ENCODE measurements at regions of chr3 and their contacts with region 1.

Region 1: GRCh38 chr3:53160660-53161449 is at the start of gene PRKCD:
- DNase-seq: peak; percentile 57 to 91
- ATAC-seq: peak; percentile 41 to 73 (median 60)
- H3K4me3 ChIP-seq: peak within 1 kb of the TSS; percentile 95
- H3K4me3 Mint-ChIP-seq: peak within 1 kb of the TSS; percentile 93
- H3K27ac ChIP-seq: peak within 1 kb of the TSS; percentile 80
- H3K27ac Mint-ChIP-seq: peak within 1 kb of the TSS; percentile 82 to 94
- H3K4me1 ChIP-seq: peaks cover 57% of the 10 kb centered on the region
- H3K4me1 Mint-ChIP-seq: peaks cover 23 to 43% of the 10 kb centered on the region in 2 donors
- H3K27me3 ChIP-seq: peaks cover 8% of the 10 kb centered on the region
- H3K27me3 Mint-ChIP-seq: peaks cover 17 to 18% of the 10 kb centered on the region in 2 donors
- CTCF ChIP-seq: peak; percentile 57
- total RNA-seq, gene PRKCD: 31.7 to 60.0 (median 36.3) TPM

Region 2: DNA sequence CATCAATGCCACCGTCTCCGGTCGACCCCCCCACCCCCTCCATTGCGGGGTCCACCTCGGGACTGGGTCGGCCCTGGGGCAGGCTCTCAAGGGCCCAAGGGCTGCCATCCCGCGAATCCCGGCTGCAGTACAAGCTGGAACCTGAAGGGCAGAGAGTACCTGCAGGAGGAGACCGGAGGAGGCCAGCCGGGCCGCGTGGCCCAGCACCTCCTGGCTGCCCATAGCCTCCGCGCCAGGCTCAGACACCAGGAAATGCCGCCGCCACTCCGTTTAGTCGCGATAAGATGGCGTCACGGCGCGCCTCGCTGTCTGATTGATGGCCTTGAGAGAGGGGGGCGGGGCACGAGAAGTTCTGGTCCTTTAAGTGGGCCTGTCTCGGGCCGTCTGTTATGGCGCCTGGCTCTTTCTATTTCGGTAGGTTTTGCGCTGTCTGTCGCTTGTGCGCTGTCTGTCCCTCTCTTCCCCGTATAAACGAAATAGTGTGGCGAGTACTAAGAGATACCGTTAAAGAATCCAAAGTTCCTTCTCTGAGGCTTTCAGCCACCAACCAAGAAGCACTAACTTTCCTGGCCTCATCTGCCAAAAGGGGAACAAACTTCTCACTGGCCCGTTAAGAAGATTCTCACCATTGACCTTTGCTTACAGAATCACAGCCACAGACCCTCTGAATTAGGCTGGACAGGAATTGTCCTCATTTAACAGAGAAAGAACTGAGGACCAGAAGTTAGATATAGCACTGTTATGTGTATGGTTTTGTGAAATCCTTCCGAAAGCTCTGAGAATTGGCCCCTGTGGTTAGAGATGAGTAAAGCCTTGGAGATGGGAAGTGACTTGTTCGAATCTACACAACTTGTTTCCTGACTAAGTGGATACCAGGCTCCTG is 30.4 kb before region 1 on chr3 and contains the start of gene RFT1:
- intact Hi-C with region 1: loop called (anchors 1 kb)
- DNase-seq: peak; percentile 98 to 99
- ATAC-seq: peak; percentile 95 to 98 (median 96)
- H3K4me3 ChIP-seq: peak within 1 kb of the TSS; percentile 74
- H3K4me3 Mint-ChIP-seq: peak within 1 kb of the TSS; percentile 91
- H3K27ac ChIP-seq: peak within 1 kb of the TSS; percentile 89
- H3K27ac Mint-ChIP-seq: peak within 1 kb of the TSS; percentile 94 to 99
- H3K4me1 ChIP-seq: peaks cover 13% of the 10 kb centered on the region
- H3K4me1 Mint-ChIP-seq: peaks cover 25% of the 10 kb centered on the region in 2 donors
- H3K27me3 ChIP-seq: no peaks in the 10 kb centered on the region
- H3K27me3 Mint-ChIP-seq: no peaks in the 10 kb centered on the region
- CTCF ChIP-seq: no peak
- total RNA-seq, gene RFT1: 13.3 to 17.2 (median 14.1) TPM